AG04450 (cell line): ENCODE measurements at regions of chr4 and their contacts with region 1.

Region 1: GRCh38 chr4:107709916-107710315 is 10.1 kb downstream of the PAPSS1 start:
- DNase-seq: no peak
- H3K4me3 ChIP-seq: no peak overlapping the region
- H3K27ac ChIP-seq: no peak overlapping the region
- H3K27me3 ChIP-seq: no peaks in the 10 kb centered on the region
- CTCF ChIP-seq: no peak

Region 2: GRCh38 chr4:107689912-107690565 is 19.9 kb before region 1 on chr4:
- CTCF ChIA-PET with region 1: no interaction called
- POLR2A ChIA-PET with region 1: no interaction called
- DNase-seq: peak; percentile 54
- H3K4me3 ChIP-seq: no peak overlapping the region
- H3K27ac ChIP-seq: no peak overlapping the region
- H3K27me3 ChIP-seq: no peaks in the 10 kb centered on the region
- CTCF ChIP-seq: no peak

Region 3: GRCh38 chr4:107719922-107720722 is 10.2 kb after region 1 on chr4 and contains the start of gene PAPSS1:
- CTCF ChIA-PET with region 1: no interaction called
- POLR2A ChIA-PET with region 1: interaction called, 12 read pairs
- DNase-seq: peak; percentile 91
- H3K4me3 ChIP-seq: peak within 1 kb of the TSS; percentile 81
- H3K27ac ChIP-seq: peak within 1 kb of the TSS; percentile 90
- H3K27me3 ChIP-seq: no peaks in the 10 kb centered on the region
- CTCF ChIP-seq: no peak
- polyA plus RNA-seq, gene PAPSS1: 79.0 and 95.5 TPM in 2 replicates